Endothelial cell of umbilical vein (primary cell): ENCODE measurements at regions of chr1 and their contacts with region 1.

Region 1: DNA sequence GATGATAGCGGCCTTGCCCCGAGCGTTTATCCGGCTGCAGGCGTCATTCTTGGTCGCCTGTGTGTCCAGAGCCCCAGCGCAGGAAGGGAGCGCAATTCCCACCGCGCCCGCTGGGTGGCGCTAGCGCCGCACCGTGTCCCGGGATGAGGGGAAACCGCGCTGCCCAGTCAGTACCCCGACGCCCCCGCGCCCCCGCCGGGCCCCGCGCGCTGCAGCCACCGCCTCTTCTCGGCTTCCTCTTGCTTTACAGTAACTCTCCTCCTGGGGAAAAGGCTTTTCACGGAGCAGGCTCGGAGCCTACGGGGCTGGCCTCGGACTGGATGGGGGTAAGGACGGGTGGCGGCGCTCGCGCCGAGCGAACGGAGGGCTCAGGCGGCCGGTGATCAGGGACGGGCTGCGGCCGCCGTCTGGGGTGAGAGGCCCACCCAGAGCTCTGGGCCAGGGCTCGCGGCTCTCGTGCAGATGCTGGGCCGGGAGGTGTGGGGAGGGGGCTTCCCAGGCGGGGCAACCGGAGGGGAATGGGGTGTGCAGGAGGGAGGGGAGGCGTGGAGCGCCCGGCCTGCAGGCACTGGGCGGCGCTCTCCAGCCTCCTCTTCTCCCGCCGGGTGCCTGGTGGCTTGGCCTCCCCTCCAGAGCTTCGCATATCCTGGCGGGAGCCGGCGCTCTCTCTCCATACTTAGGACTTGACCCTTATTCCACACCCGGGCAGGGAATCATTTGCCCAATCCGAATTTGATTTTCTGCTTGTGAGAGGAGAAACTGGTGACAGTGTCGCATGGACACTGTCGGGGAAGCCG is 29.8 kb downstream of the TEX35 start:
- DNase-seq: peak; percentile 89
- H3K4me3 ChIP-seq: peak overlapping the region; percentile 48 to 77 (median 53)
- H3K27ac ChIP-seq: no peak overlapping the region
- H3K4me1 ChIP-seq: peaks cover 11% of the 10 kb centered on the region
- H3K27me3 ChIP-seq: no peaks in the 10 kb centered on the region
- CTCF ChIP-seq: peak; percentile 83 to 89
- POLR2A ChIP-seq: no peak

Region 2: GRCh38 chr1:178310685-178311105 is 232.1 kb before region 1 on chr1:
- CTCF ChIA-PET with region 1: interaction called, 20 read pairs
- POLR2A ChIA-PET with region 1: no interaction called
- dilution Hi-C with region 1: no loop called
- intact Hi-C with region 1: no loop called
- DNase-seq: peak; percentile 70
- H3K4me3 ChIP-seq: no peak overlapping the region
- H3K27ac ChIP-seq: no peak overlapping the region
- H3K4me1 ChIP-seq: no peaks in the 10 kb centered on the region
- H3K27me3 ChIP-seq: no peaks in the 10 kb centered on the region
- CTCF ChIP-seq: peak; percentile 50 to 56
- POLR2A ChIP-seq: no peak

Region 3: GRCh38 chr1:178552856-178553255 is 10.1 kb after region 1 on chr1:
- CTCF ChIA-PET with region 1: interaction called, 12 read pairs
- POLR2A ChIA-PET with region 1: no interaction called
- dilution Hi-C with region 1: no loop called
- intact Hi-C with region 1: no loop called
- DNase-seq: no peak
- H3K4me3 ChIP-seq: no peak overlapping the region
- H3K27ac ChIP-seq: no peak overlapping the region
- H3K4me1 ChIP-seq: no peaks in the 10 kb centered on the region
- H3K27me3 ChIP-seq: no peaks in the 10 kb centered on the region
- CTCF ChIP-seq: no peak
- POLR2A ChIP-seq: no peak

Region 4: DNA sequence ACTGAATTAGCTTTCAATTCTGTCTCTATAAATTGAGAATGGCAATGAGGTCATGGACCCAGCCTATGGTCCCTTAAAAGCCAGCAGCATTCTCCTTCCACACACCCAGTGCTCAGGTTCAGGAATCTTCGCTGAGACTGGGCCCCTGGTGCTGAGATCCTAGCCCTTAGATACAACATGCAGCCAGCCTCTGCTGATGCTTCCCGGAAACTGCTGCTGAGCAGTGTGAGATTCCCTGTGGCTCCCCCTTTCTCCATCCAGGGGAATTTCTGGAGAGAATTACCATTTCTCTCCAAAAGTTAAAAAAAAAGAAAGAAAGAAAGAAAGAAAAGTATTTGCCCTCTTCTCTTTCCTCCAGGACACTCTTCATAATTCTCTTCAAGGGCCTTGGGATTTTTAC is 150.6 kb after region 1 on chr1:
- CTCF ChIA-PET with region 1: interaction called, 12 read pairs
- POLR2A ChIA-PET with region 1: no interaction called
- dilution Hi-C with region 1: no loop called
- intact Hi-C with region 1: no loop called
- DNase-seq: no peak
- H3K4me3 ChIP-seq: no peak overlapping the region
- H3K27ac ChIP-seq: no peak overlapping the region
- H3K4me1 ChIP-seq: no peaks in the 10 kb centered on the region
- H3K27me3 ChIP-seq: no peaks in the 10 kb centered on the region
- CTCF ChIP-seq: peak in 1 of 2 donors; percentile 18
- POLR2A ChIP-seq: no peak

Region 5: GRCh38 chr1:178768423-178768822 is 225.7 kb after region 1 on chr1:
- CTCF ChIA-PET with region 1: interaction called, 20 read pairs
- POLR2A ChIA-PET with region 1: no interaction called
- dilution Hi-C with region 1: no loop called
- intact Hi-C with region 1: loop called (anchors 1 kb)
- DNase-seq: no peak
- H3K4me3 ChIP-seq: no peak overlapping the region
- H3K27ac ChIP-seq: no peak overlapping the region
- H3K4me1 ChIP-seq: no peaks in the 10 kb centered on the region
- H3K27me3 ChIP-seq: no peaks in the 10 kb centered on the region
- CTCF ChIP-seq: peak; percentile 73 to 78
- POLR2A ChIP-seq: no peak

Region 6: GRCh38 chr1:179365320-179366092 is 822.7 kb after region 1 on chr1 and contains the start of gene AXDND1:
- CTCF ChIA-PET with region 1: no interaction called
- POLR2A ChIA-PET with region 1: no interaction called
- dilution Hi-C with region 1: no loop called
- intact Hi-C with region 1: loop called (anchors 1 kb)
- DNase-seq: peak; percentile 86
- H3K4me3 ChIP-seq: peak within 1 kb of the TSS; percentile 79 to 85 (median 80)
- H3K27ac ChIP-seq: peak within 1 kb of the TSS; percentile 97
- H3K4me1 ChIP-seq: peaks cover 4% of the 10 kb centered on the region
- H3K27me3 ChIP-seq: peaks cover 0 to 1% of the 10 kb centered on the region in 2 experiments
- CTCF ChIP-seq: no peak
- POLR2A ChIP-seq: peak; percentile 32
- total RNA-seq, gene AXDND1: 0.67 TPM in 1 of 2 replicates, not detected in the other